Heart right ventricle (tissue), 16 donors: ENCODE measurements at regions of chr12 and their contacts with region 1.

Region 1: DNA sequence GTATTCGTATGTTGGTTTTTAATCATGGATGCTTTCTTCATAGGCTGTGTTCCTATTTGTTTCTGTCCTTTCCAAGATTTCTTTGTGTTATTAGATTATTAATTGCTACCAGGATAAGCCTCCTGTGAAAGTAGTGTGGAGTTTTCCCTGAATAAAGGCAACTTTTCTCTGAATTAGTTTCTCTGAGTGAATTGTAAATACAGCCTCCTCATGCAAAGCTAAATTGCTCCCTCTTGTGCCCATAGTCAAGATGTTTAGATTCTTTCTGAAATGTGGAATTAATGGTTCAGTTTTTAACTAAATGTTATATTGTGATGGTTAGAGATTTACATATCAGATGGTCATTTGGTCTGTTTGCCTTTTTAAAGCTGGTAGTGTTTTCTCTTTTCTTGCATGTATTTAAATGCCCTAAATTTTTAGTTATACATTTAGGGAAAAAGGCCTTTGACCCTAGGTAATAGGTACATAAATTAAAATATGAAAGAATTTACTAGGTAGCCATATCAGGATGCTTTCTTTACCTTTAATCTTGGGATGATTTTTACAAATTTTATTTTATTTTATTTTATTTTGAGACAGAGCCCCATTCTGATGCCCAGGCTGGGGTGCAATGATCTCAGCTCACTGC is 8.9 kb downstream of the APAF1 start:
- DNase-seq: peak in 1 of 2 donors; percentile 20
- ATAC-seq: peak in 1 of 8 donors; percentile 47
- H3K4me3 ChIP-seq: no peak overlapping the region
- H3K27ac ChIP-seq: no peak overlapping the region
- H3K4me1 ChIP-seq: no peaks in the 10 kb centered on the region
- H3K27me3 ChIP-seq: no peaks in the 10 kb centered on the region
- CTCF ChIP-seq: peak; percentile 32 to 79 (median 67)

Region 2: DNA sequence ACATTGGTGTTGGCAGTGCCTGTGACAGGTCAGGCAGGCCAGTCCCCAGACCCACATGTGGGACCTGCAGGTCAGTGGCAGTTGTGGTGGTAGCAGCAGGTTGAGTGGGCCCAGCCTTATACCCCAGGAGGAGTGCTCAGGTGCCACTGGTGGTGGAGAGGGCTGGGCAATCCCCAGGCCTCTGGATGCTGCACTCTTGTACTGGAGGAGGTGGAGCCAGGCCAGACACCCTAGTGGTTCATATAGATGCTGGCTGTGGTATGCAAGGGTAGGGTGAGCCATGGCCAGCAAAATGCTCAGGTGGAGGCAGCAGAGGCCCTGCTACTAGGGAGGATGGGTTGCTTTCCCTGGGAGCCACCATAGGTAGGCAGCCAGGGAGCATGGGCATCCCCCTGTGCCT is 329.0 kb before region 1 on chr12:
- intact Hi-C with region 1: no loop called
- DNase-seq: no peak
- ATAC-seq: no peak
- H3K4me3 ChIP-seq: no peak overlapping the region
- H3K27ac ChIP-seq: no peak overlapping the region
- H3K4me1 ChIP-seq: no peaks in the 10 kb centered on the region
- H3K27me3 ChIP-seq: no peaks in the 10 kb centered on the region
- CTCF ChIP-seq: no peak

Region 3: GRCh38 chr12:98418357-98419075 is 235.5 kb before region 1 on chr12:
- intact Hi-C with region 1: loop called in 3 of 10 experiments (anchors 5 to 10 kb)
- DNase-seq: peak; percentile 75 to 78
- ATAC-seq: peak; percentile 70 to 87 (median 82)
- H3K4me3 ChIP-seq: no peak overlapping the region
- H3K27ac ChIP-seq: peak overlapping the region in 8 of 10 donors; percentile 2 to 72 (median 46)
- H3K4me1 ChIP-seq: peaks cover 0 to 32% (median 23%) of the 10 kb centered on the region in 9 donors
- H3K27me3 ChIP-seq: no peaks in the 10 kb centered on the region
- CTCF ChIP-seq: no peak

Region 4: GRCh38 chr12:98424726-98425401 is 229.1 kb before region 1 on chr12:
- intact Hi-C with region 1: loop called in 1 of 10 experiments (anchors 10 kb)
- DNase-seq: peak; percentile 39 to 40
- ATAC-seq: peak in 7 of 8 donors; percentile 52 to 81 (median 77)
- H3K4me3 ChIP-seq: no peak overlapping the region
- H3K27ac ChIP-seq: peak overlapping the region in 2 of 10 donors; percentile 5 to 9
- H3K4me1 ChIP-seq: peaks cover 0 to 14% (median 4%) of the 10 kb centered on the region in 9 donors
- H3K27me3 ChIP-seq: no peaks in the 10 kb centered on the region
- CTCF ChIP-seq: peak; percentile 39 to 81 (median 70)

Region 5: GRCh38 chr12:98559666-98560065 is 94.3 kb before region 1 on chr12:
- intact Hi-C with region 1: loop called in 2 of 10 experiments (anchors 2 to 10 kb)
- DNase-seq: no peak
- ATAC-seq: no peak
- H3K4me3 ChIP-seq: no peak overlapping the region
- H3K27ac ChIP-seq: no peak overlapping the region
- H3K4me1 ChIP-seq: no peaks in the 10 kb centered on the region
- H3K27me3 ChIP-seq: no peaks in the 10 kb centered on the region
- CTCF ChIP-seq: no peak

Region 6: GRCh38 chr12:98572010-98572409 is 82.0 kb before region 1 on chr12:
- intact Hi-C with region 1: loop called in 6 of 10 experiments (anchors 2 to 10 kb)
- DNase-seq: no peak
- ATAC-seq: peak in 2 of 8 donors; percentile 33 to 44
- H3K4me3 ChIP-seq: no peak overlapping the region
- H3K27ac ChIP-seq: no peak overlapping the region
- H3K4me1 ChIP-seq: peaks cover 0 to 5% (median 0%) of the 10 kb centered on the region in 9 donors
- H3K27me3 ChIP-seq: no peaks in the 10 kb centered on the region
- CTCF ChIP-seq: peak in 4 of 9 donors; percentile 13 to 28 (median 18)

Region 7: GRCh38 chr12:98686603-98687002 is 32.6 kb after region 1 on chr12:
- intact Hi-C with region 1: no loop called
- DNase-seq: no peak
- ATAC-seq: no peak
- H3K4me3 ChIP-seq: no peak overlapping the region
- H3K27ac ChIP-seq: no peak overlapping the region
- H3K4me1 ChIP-seq: peaks cover 0 to 5% (median 0%) of the 10 kb centered on the region in 9 donors
- H3K27me3 ChIP-seq: no peaks in the 10 kb centered on the region
- CTCF ChIP-seq: no peak